CD4-positive, alpha-beta T cell (primary cell): ENCODE measurements at regions of chr1 and their contacts with region 1.

Region 1: DNA sequence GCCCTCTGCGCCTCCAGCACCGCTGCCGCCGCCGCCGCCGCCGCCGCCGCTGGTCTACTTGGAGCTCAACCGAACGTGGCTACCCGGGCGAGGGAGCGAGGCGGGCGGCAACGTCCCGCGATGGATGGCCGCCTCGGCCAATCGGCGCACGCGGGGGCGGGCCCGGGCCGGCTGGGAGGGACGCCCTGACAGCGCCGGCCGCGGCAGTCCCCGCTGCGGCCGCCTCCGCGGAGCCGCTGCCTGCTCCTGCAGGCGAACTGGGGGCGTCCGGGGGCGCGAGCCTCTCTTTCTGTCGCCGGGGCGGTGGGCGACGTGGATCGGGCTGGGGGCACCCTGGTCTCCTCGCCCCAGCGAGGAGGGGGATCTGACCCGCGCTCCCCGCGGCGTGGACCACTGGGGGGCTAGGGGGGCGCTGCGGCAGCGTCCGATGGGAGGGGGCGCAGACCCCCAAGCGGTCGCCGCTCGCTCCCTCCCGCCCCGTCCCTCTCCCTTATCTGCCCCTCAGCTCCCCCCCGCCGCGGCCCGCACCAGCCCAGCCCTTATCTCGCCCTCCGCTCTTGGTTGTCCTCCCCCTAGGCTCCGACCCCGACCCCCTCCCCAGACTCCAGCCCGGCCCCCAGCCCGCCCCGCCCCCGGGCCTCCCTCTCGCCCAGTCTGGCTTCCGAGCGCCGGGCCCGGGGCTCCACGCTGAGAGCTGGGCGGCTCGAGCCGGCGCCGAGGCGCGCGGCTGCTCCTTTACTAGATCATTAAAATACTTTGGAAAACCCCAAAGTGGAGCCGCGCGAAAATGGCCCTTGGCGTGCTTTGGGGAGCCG is at the start of gene SSBP3:
- DNase-seq: peak; percentile 82 to 97 (median 90)
- ATAC-seq: peak; percentile 92
- H3K4me3 ChIP-seq: peak within 1 kb of the TSS; percentile 74
- H3K4me3 Mint-ChIP-seq: peak within 1 kb of the TSS; percentile 97
- H3K27ac ChIP-seq: peak within 1 kb of the TSS; percentile 60 to 90
- H3K27ac Mint-ChIP-seq: peak within 1 kb of the TSS; percentile 92
- H3K4me1 ChIP-seq: peaks cover 67% of the 10 kb centered on the region
- H3K4me1 Mint-ChIP-seq: peaks cover 73% of the 10 kb centered on the region
- H3K27me3 ChIP-seq: no peaks in the 10 kb centered on the region
- H3K27me3 Mint-ChIP-seq: no peaks in the 10 kb centered on the region
- CTCF ChIP-seq: no peak
- total RNA-seq, gene SSBP3: 50.6 to 52.4 TPM

Region 2: GRCh38 chr1:53837924-53838652 is 568.5 kb before region 1 on chr1 and contains the start of gene NDC1:
- CTCF ChIA-PET with region 1: no interaction called
- POLR2A ChIA-PET with region 1: no interaction called
- intact Hi-C with region 1: loop called in 1 of 2 experiments (anchors 5 kb)
- DNase-seq: peak; percentile 79 to 96 (median 86)
- ATAC-seq: peak; percentile 89
- H3K4me3 ChIP-seq: peak within 1 kb of the TSS; percentile 73
- H3K4me3 Mint-ChIP-seq: peak within 1 kb of the TSS; percentile 95
- H3K27ac ChIP-seq: peak within 1 kb of the TSS; percentile 95 to 98
- H3K27ac Mint-ChIP-seq: peak within 1 kb of the TSS; percentile 95
- H3K4me1 ChIP-seq: peaks cover 13% of the 10 kb centered on the region
- H3K4me1 Mint-ChIP-seq: peaks cover 37% of the 10 kb centered on the region
- H3K27me3 ChIP-seq: peaks cover 0 to 5% of the 10 kb centered on the region in 2 experiments
- H3K27me3 Mint-ChIP-seq: no peaks in the 10 kb centered on the region
- CTCF ChIP-seq: no peak
- total RNA-seq, gene NDC1: 5.4 to 8.1 TPM

Region 3: DNA sequence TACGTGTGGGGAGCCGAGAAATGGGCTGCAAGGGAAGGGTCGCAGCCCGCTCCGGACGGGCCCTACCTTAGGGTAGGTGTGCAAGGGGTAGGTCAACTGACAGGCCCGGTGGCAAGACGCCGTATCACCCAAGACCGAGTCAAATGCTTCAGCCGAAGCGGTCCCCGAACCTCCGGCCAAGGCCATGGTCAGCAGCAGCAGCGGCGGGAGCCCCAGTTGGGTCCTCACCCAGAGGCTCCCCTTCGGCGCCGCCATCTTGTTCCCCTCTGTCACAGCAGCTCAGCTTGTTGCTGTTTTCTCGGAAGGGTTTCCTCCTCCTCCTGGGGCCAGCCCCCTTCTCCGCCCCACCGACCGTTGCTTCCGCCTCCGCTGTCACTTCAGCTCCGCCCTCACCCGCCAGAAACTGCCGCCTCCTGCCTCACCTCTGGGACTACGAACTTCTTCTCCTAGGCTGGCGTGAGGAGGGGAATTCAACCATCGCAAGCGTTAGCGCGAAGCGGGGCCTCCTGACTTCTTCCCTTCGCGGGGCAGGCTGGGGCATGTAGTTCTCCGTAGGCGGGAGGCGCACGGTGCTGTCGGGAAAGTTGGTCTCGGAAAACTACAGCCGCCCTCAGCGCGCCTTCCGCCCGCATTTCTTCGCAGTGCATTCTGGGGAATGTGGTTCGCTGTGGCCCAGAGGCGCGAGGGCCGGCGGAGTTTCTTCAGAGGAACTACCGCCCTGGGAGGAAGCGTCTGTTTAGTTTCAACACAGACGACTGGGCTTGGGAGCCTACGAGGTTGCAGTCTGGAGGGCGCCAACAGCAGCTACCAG is 353.4 kb before region 1 on chr1 and contains the starts of genes TCEANC2 and TMEM59:
- CTCF ChIA-PET with region 1: no interaction called
- POLR2A ChIA-PET with region 1: interaction called, 4 read pairs
- intact Hi-C with region 1: loop called (anchors 5 to 10 kb)
- DNase-seq: peak; percentile 93 to 99 (median 95)
- ATAC-seq: peak; percentile 89
- H3K4me3 ChIP-seq: peak within 1 kb of the TSS; percentile 89
- H3K4me3 Mint-ChIP-seq: no peak within 1 kb of the TSS
- H3K27ac ChIP-seq: peak within 1 kb of the TSS; percentile 71 to 90
- H3K27ac Mint-ChIP-seq: no peak within 1 kb of the TSS
- H3K4me1 ChIP-seq: peaks cover 35% of the 10 kb centered on the region
- H3K4me1 Mint-ChIP-seq: peaks cover 45% of the 10 kb centered on the region
- H3K27me3 ChIP-seq: no peaks in the 10 kb centered on the region
- H3K27me3 Mint-ChIP-seq: no peaks in the 10 kb centered on the region
- CTCF ChIP-seq: no peak
- total RNA-seq, gene TCEANC2: 2.3 to 2.7 TPM
- total RNA-seq, gene TMEM59: 128 TPM

Region 4: GRCh38 chr1:54280651-54281050 is 125.9 kb before region 1 on chr1:
- CTCF ChIA-PET with region 1: interaction called, 3 read pairs
- POLR2A ChIA-PET with region 1: interaction called, 8 read pairs
- intact Hi-C with region 1: loop called (anchors 1 to 5 kb)
- DNase-seq: peak in 7 of 14 experiments; percentile 15 to 61 (median 28)
- ATAC-seq: peak; percentile 39
- H3K4me3 ChIP-seq: no peak overlapping the region
- H3K4me3 Mint-ChIP-seq: peak overlapping the region; percentile 71
- H3K27ac ChIP-seq: peak overlapping the region; percentile 11 to 24
- H3K27ac Mint-ChIP-seq: peak overlapping the region; percentile 98
- H3K4me1 ChIP-seq: peaks cover 82% of the 10 kb centered on the region
- H3K4me1 Mint-ChIP-seq: peaks cover 80% of the 10 kb centered on the region
- H3K27me3 ChIP-seq: no peaks in the 10 kb centered on the region
- H3K27me3 Mint-ChIP-seq: no peaks in the 10 kb centered on the region
- CTCF ChIP-seq: no peak

Region 5: DNA sequence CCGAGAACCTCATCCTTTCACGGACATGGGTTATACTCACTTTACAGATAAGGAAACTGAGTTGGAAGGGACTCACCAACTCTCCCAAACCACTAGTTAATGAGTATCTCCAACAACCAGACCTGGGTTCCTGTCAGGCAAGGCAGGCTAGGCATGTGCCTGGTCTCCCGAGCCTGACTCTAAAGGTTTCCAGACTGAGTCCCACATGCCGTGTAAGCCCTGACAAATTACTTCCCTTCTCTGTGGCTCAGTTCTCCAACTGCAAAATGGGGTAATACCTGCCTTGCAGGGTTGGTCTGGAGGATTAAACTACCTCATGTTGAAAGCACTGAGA is 34.6 kb before region 1 on chr1:
- CTCF ChIA-PET with region 1: interaction called, 4 read pairs
- POLR2A ChIA-PET with region 1: no interaction called
- intact Hi-C with region 1: loop called in 1 of 2 experiments (anchors 2 kb)
- DNase-seq: no peak
- ATAC-seq: no peak
- H3K4me3 ChIP-seq: no peak overlapping the region
- H3K4me3 Mint-ChIP-seq: no peak overlapping the region
- H3K27ac ChIP-seq: no peak overlapping the region
- H3K27ac Mint-ChIP-seq: peak overlapping the region; percentile 63
- H3K4me1 ChIP-seq: peaks cover 45% of the 10 kb centered on the region
- H3K4me1 Mint-ChIP-seq: peaks cover 81% of the 10 kb centered on the region
- H3K27me3 ChIP-seq: no peaks in the 10 kb centered on the region
- H3K27me3 Mint-ChIP-seq: no peaks in the 10 kb centered on the region
- CTCF ChIP-seq: no peak

Region 6: GRCh38 chr1:54488779-54489626 is 82.5 kb after region 1 on chr1:
- CTCF ChIA-PET with region 1: interaction called, 26 read pairs
- POLR2A ChIA-PET with region 1: interaction called, 138 read pairs
- intact Hi-C with region 1: loop called (anchors 1 kb)
- DNase-seq: peak; percentile 38 to 83 (median 64)
- ATAC-seq: peak; percentile 57
- H3K4me3 ChIP-seq: peak overlapping the region; percentile 80
- H3K4me3 Mint-ChIP-seq: peak overlapping the region; percentile 87
- H3K27ac ChIP-seq: peak overlapping the region; percentile 58 to 78
- H3K27ac Mint-ChIP-seq: peak overlapping the region; percentile 62
- H3K4me1 ChIP-seq: peaks cover 52% of the 10 kb centered on the region
- H3K4me1 Mint-ChIP-seq: peaks cover 50% of the 10 kb centered on the region
- H3K27me3 ChIP-seq: no peaks in the 10 kb centered on the region
- H3K27me3 Mint-ChIP-seq: no peaks in the 10 kb centered on the region
- CTCF ChIP-seq: peak; percentile 99

Region 7: DNA sequence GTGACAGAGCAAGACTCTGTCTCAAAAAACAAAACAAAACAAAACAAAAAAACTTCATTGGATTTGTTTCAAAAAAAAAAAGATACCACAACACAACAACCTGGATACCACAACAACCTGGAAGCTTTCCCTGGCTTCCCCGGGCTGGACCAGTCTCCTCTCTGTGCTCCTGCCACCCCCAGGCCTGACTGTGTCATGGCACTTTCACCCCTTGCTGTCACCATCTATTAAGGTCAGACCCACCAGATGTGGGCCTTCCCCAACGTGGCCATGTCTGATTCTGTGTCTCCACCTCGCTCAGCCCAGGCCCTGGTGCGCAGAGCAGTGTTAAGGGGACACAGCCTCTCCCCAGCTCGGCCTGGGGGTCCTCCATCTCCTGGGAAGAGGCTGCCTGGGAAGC is 113.2 kb after region 1 on chr1:
- CTCF ChIA-PET with region 1: no interaction called
- POLR2A ChIA-PET with region 1: no interaction called
- intact Hi-C with region 1: no loop called
- DNase-seq: no peak
- ATAC-seq: no peak
- H3K4me3 ChIP-seq: no peak overlapping the region
- H3K4me3 Mint-ChIP-seq: no peak overlapping the region
- H3K27ac ChIP-seq: no peak overlapping the region
- H3K27ac Mint-ChIP-seq: no peak overlapping the region
- H3K4me1 ChIP-seq: no peaks in the 10 kb centered on the region
- H3K4me1 Mint-ChIP-seq: no peaks in the 10 kb centered on the region
- H3K27me3 ChIP-seq: no peaks in the 10 kb centered on the region
- H3K27me3 Mint-ChIP-seq: no peaks in the 10 kb centered on the region
- CTCF ChIP-seq: no peak

Region 8: GRCh38 chr1:54800899-54801759 is 394.6 kb after region 1 on chr1 and contains the start of gene TTC22:
- CTCF ChIA-PET with region 1: no interaction called
- POLR2A ChIA-PET with region 1: no interaction called
- intact Hi-C with region 1: loop called in 1 of 2 experiments (anchors 5 kb)
- DNase-seq: peak; percentile 43 to 83 (median 68)
- ATAC-seq: peak; percentile 87
- H3K4me3 ChIP-seq: peak within 1 kb of the TSS; percentile 82
- H3K4me3 Mint-ChIP-seq: peak within 1 kb of the TSS; percentile 98
- H3K27ac ChIP-seq: peak within 1 kb of the TSS; percentile 33 to 57
- H3K27ac Mint-ChIP-seq: peak within 1 kb of the TSS; percentile 94
- H3K4me1 ChIP-seq: peaks cover 58% of the 10 kb centered on the region
- H3K4me1 Mint-ChIP-seq: peaks cover 63% of the 10 kb centered on the region
- H3K27me3 ChIP-seq: no peaks in the 10 kb centered on the region
- H3K27me3 Mint-ChIP-seq: no peaks in the 10 kb centered on the region
- CTCF ChIP-seq: peak; percentile 84
- total RNA-seq, gene TTC22: 4.4 to 4.5 TPM